Transverse colon (tissue), 4 donors: ENCODE measurements at regions of chr5 and their contacts with region 1.

Region 1: DNA sequence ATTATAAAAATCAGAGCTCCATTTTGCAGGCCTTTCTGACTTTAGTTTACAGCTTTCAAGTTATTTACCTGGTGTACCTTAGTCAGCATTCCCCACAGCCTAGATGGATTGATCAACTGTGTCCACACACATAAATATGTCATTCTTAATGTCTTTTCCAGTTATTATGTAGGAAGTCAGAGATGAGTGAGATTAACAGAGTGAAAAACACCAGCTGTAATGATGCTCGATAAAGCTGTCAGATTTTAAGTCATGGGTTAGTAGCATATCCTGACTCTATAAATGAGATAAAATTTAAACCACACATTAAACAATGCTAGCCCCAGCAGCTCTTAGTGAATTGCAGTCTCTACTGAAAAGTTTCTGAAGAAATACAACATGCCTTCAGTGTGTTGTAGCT is 48.9 kb downstream of the NUDT12 start:
- DNase-seq: no peak
- H3K4me3 ChIP-seq: no peak overlapping the region
- H3K27ac ChIP-seq: no peak overlapping the region
- H3K4me1 ChIP-seq: peaks cover 0 to 17% (median 4%) of the 10 kb centered on the region in 4 donors
- H3K27me3 ChIP-seq: no peaks in the 10 kb centered on the region
- CTCF ChIP-seq: no peak
- EP300 ChIP-seq: no peak
- POLR2A ChIP-seq: no peak

Region 2: GRCh38 chr5:103463261-103463660 is 50.4 kb before region 1 on chr5:
- in situ Hi-C with region 1: no loop called
- intact Hi-C with region 1: loop called (anchors 2 kb)
- DNase-seq: no peak
- H3K4me3 ChIP-seq: no peak overlapping the region
- H3K27ac ChIP-seq: no peak overlapping the region
- H3K4me1 ChIP-seq: no peaks in the 10 kb centered on the region
- H3K27me3 ChIP-seq: no peaks in the 10 kb centered on the region
- CTCF ChIP-seq: no peak
- EP300 ChIP-seq: no peak
- POLR2A ChIP-seq: no peak